ENCODE measurements at regions of chr3 and their contacts with region 1.

Region 1: GRCh38 chr3:139329345-139329850 is 14.4 kb upstream of the MRPS22 start:
- DNase-seq: peak; percentile 74
- ATAC-seq: peak; percentile 93
- H3K4me3 ChIP-seq: peak overlapping the region; percentile 26 to 38
- H3K27ac ChIP-seq: peak overlapping the region; percentile 29; the same call in 1 of the 2 replicates
- H3K4me1 ChIP-seq: peaks cover 34 to 44% of the 10 kb centered on the region in 2 experiments
- H3K27me3 ChIP-seq: no peaks in the 10 kb centered on the region
- CTCF ChIP-seq: peak; percentile 99 to 100 (median 99)
- POLR2A ChIP-seq: no peak
- RAD21 ChIP-seq: peak; percentile 100

Region 2: DNA sequence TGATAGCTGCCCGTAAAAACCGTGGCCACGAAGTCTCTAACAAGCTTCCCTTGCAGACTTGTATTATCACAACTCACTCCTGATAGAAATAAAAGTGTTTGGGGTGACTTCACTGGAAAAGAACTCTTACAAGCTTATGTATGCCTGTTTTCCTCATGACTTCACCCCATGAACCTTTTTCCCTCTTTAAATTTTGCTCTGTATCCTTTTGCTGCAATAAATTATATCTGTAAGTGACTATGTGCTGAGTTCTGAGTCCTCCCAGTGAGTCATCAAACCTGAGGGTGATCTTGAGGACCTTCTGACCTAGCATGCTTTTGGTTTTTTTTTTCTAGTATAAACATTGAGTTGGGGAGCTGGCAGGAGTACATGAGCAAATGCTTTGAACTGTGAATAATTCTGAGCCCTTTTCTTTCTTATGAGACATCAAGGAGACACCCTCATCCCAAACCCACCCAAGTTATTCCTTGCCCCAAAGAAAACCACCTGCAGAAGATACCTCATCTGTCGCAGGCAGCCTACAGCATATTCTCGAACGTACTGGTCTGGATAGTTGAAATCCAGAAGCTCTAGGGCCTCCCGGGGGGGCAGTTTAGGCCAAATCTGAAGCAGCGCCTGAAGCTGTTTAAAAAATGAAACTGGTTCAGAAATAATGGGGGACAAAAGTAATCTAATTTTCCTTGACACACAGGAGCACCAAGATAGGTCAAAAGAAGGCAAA is 635.0 kb before region 1 on chr3:
- CTCF ChIA-PET with region 1: no interaction called
- POLR2A ChIA-PET with region 1: no interaction called
- RAD21 ChIA-PET with region 1: no interaction called
- intact Hi-C with region 1: loop called (anchors 5 kb)
- DNase-seq: peak; percentile 47
- ATAC-seq: peak; percentile 84
- H3K4me3 ChIP-seq: no peak overlapping the region
- H3K27ac ChIP-seq: peak overlapping the region; percentile 44; the same call in 1 of the 2 replicates
- H3K4me1 ChIP-seq: peaks cover 13 to 14% of the 10 kb centered on the region in 2 experiments
- H3K27me3 ChIP-seq: no peaks in the 10 kb centered on the region
- CTCF ChIP-seq: no peak
- POLR2A ChIP-seq: no peak
- RAD21 ChIP-seq: no peak

Region 3: DNA sequence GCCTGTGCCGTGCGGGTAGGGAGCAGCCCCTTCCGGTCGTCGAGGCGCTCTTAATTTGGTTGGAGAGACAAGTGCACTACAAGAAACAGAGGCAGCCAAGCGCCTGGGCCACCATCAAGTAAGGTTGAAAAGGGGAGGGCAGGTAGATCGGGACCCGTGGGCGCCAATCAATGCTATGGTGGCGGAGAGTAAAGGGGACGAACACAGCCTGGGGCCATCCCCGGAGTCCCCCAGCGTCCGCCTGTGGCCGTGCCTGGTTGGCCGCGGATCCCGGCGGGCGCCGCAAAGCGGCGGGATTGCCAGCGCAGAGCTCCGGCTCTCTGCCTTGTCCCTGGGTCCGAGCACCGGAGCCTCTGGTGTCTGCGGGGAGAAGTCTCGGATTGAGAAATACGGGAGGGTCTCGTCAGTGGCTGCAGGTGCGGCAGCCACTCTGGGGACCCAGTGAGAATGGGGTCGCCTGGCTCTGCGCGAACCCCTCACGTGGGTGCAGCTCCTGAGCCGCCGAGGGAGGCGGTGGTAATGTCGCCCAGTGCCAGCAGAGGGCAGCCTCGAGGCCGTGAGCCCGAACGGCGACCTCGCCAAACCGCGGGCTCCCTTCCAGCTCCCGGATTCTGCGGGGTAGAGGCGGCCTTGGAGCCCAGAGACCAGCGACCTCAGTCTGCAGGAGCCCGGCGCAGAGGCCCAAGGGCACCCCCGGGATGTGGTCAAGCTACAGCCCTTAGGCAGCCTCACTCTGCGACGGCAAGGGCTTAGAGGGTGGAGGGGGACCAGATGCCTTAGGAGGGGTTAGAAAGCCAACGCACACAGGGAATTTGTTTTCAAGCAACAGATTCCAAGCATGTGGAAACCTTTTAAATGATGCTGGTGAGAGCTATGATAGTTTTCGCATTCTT is 393.3 kb before region 1 on chr3:
- CTCF ChIA-PET with region 1: interaction called, 26 read pairs
- POLR2A ChIA-PET with region 1: no interaction called
- RAD21 ChIA-PET with region 1: interaction called in 1 of 2 experiments, 4 read pairs
- intact Hi-C with region 1: loop called (anchors 1 kb)
- DNase-seq: peak; percentile 52
- ATAC-seq: peak; percentile 88
- H3K4me3 ChIP-seq: peak overlapping the region; percentile 43 to 68
- H3K27ac ChIP-seq: peak overlapping the region; percentile 21
- H3K4me1 ChIP-seq: peaks cover 6 to 18% of the 10 kb centered on the region in 2 experiments; a peak in 3 of 4 replicates
- H3K27me3 ChIP-seq: no peaks in the 10 kb centered on the region
- CTCF ChIP-seq: peak; percentile 70 to 91 (median 76)
- POLR2A ChIP-seq: no peak
- RAD21 ChIP-seq: peak; percentile 61

Region 4: GRCh38 chr3:139111392-139112229 is 217.8 kb before region 1 on chr3:
- CTCF ChIA-PET with region 1: interaction called, 116 read pairs
- POLR2A ChIA-PET with region 1: interaction called, 4 read pairs
- RAD21 ChIA-PET with region 1: interaction called, 22 to 27 read pairs
- intact Hi-C with region 1: loop called (anchors 2 kb)
- DNase-seq: peak; percentile 57
- ATAC-seq: peak; percentile 89
- H3K4me3 ChIP-seq: peak overlapping the region in 1 of 2 experiments; percentile 21; a peak in 1 of 4 replicates
- H3K27ac ChIP-seq: peak overlapping the region; percentile 2; the same call in 1 of the 2 replicates
- H3K4me1 ChIP-seq: peaks cover 10 to 31% of the 10 kb centered on the region in 2 experiments; a peak in 3 of 4 replicates
- H3K27me3 ChIP-seq: no peaks in the 10 kb centered on the region
- CTCF ChIP-seq: peak; percentile 82 to 91 (median 89)
- POLR2A ChIP-seq: no peak
- RAD21 ChIP-seq: peak; percentile 91

Region 5: GRCh38 chr3:139187650-139188049 is 141.7 kb before region 1 on chr3:
- CTCF ChIA-PET with region 1: no interaction called
- POLR2A ChIA-PET with region 1: no interaction called
- RAD21 ChIA-PET with region 1: no interaction called
- intact Hi-C with region 1: no loop called
- DNase-seq: no peak
- ATAC-seq: peak; percentile 61
- H3K4me3 ChIP-seq: no peak overlapping the region
- H3K27ac ChIP-seq: no peak overlapping the region
- H3K4me1 ChIP-seq: no peaks in the 10 kb centered on the region
- H3K27me3 ChIP-seq: no peaks in the 10 kb centered on the region
- CTCF ChIP-seq: no peak
- POLR2A ChIP-seq: no peak
- RAD21 ChIP-seq: peak; percentile 22; the same call in 1 of the 2 replicates

Region 6: DNA sequence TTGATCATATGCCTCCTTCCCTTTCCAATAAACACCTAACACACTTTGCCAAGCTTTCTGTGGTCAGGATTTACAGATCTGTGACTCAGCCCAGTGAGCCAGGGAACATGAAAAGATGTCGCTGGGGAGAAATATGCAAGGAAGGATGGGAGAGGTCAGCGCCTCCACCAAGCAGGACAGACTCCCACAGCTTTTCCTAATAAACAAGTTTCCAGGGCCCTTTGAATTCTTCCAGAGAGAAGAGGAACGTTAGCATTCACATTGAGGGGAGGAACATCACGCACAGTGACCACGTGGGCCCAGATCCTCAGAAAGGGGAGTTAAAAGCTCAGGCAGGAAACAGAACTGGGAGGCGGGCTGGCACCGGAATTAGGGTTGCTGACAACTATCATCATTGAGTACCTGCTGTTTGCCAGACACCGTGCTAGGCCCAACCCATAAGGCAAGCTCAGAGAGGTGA is 18.9 kb before region 1 on chr3:
- CTCF ChIA-PET with region 1: interaction called, 10 read pairs
- POLR2A ChIA-PET with region 1: no interaction called
- RAD21 ChIA-PET with region 1: interaction called in 1 of 2 experiments, 3 read pairs
- intact Hi-C with region 1: no loop called
- DNase-seq: peak; percentile 94
- ATAC-seq: peak; percentile 71
- H3K4me3 ChIP-seq: 0 out of 4 replicates have a peak overlapping the region, but pooled peaks of 1 of the 2 experiments have one; percentile 11
- H3K27ac ChIP-seq: peak overlapping the region; percentile 99
- H3K4me1 ChIP-seq: peaks cover 85 to 97% of the 10 kb centered on the region in 2 experiments
- H3K27me3 ChIP-seq: no peaks in the 10 kb centered on the region
- CTCF ChIP-seq: no peak
- POLR2A ChIP-seq: no peak
- RAD21 ChIP-seq: no peak

Measured in HCT116 (cell line).